Activated T-helper 1 cell treated with anti-CD3 and anti-CD28 coated beads, Interleukin-12 subunit alpha, Interleukin-12 subunit beta, Interleukin-2, Interleukin-4 antibody, amounts not matched to agents 30 ng/mL and 10 ng/mL and 1 ng/mL, durations not matched to agents 14 hours and 24 hours and 36 hours (primary cell): ENCODE measurements at regions of chr4 and their contacts with region 1.

Region 1: DNA sequence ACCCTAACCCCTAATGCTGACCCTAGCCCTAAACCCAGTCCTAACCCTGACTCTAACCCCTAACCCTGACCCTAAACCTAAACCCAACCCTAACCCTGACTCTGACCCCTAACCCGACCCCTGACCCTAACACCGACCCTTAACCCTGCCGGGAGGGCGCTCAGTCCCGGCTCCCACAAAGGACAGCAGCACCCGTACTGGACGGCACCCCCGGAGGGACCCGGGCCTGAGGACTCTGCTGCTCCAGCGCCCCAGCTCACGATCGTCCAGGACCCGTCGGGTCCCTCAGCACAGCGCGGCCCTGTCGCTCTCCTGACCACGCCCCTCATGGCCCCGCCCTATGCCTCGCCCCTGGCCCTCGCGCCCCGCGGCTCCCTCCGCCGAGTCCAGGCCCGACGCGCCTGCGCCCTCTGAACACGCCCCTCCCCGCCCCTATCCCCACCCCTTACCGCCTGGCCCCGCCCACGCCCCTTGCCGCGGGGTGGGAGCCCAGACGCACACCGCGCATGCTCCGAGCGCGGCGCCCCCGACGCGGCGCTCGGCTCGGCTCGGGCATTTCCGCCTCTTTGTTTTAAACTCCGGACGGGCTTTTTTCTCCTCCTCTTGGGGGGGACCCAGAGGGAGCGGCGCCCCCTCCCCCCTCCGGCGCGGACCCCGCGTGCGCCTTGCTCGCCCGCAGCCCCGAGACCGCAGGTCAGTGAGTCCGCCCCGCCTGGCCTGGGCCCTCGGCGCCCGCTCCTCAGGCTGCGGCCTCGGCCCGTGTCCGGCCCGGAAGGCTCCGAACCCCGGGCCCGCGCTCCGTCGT is at the start of gene PCGF3:
- DNase-seq: peak; percentile 95
- H3K4me3 Mint-ChIP-seq: peak within 1 kb of the TSS; percentile 83
- H3K27ac Mint-ChIP-seq: peak within 1 kb of the TSS; percentile 83
- H3K4me1 Mint-ChIP-seq: peaks cover 27% of the 10 kb centered on the region
- H3K27me3 Mint-ChIP-seq: peaks cover 2% of the 10 kb centered on the region
- total RNA-seq, gene PCGF3: 30.4 and 31.0 TPM in 2 replicates

Region 2: DNA sequence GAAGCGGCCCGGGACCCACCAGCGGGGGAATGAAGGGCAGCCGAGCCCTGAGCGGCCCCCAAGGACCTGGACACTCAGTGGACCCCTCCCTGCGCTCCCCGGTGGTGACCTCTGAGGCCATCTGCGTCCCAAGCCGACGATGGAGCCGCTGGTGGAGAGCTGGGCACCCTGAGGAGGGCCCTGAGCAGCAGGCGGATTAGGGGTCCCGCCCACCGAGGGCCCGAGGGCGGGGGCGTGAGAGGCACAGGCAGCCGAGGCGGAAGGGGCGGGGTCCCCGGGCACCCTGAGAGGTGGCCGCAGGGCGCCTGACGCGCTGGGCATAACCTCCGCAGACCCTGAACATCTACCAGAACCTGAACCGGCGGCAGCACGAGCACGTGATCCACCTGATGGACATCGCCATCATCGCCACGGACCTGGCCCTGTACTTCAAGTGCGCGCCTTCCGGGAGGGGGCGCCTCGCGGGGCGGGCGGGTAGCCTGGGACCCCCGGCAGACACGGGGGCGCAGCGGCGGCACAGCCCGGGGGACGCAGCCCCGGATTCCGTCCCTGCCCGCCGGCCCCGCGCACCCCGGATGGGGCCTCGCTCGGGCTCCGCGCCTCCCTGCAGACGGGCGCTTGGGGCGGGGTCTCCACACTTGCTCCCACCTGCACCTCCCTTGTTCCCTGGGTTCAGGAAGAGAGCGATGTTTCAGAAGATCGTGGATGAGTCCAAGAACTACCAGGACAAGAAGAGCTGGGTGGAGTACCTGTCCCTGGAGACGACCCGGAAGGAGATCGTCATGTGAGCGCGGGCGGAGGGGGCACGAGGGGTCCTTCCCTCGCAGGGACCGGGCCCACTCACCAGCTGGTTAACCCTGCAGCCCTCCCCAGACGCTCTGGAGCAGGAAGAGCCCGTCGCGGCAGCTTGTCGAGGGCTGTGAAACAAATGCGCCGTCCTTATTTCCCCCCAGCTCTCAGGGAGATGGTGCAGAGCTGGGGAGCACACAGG is 41.7 kb before region 1 on chr4:
- intact Hi-C with region 1: no loop called
- DNase-seq: peak; percentile 71
- H3K4me3 Mint-ChIP-seq: peak overlapping the region; percentile 86
- H3K27ac Mint-ChIP-seq: peak overlapping the region; percentile 68
- H3K4me1 Mint-ChIP-seq: peaks cover 8% of the 10 kb centered on the region
- H3K27me3 Mint-ChIP-seq: no peaks in the 10 kb centered on the region

Region 3: DNA sequence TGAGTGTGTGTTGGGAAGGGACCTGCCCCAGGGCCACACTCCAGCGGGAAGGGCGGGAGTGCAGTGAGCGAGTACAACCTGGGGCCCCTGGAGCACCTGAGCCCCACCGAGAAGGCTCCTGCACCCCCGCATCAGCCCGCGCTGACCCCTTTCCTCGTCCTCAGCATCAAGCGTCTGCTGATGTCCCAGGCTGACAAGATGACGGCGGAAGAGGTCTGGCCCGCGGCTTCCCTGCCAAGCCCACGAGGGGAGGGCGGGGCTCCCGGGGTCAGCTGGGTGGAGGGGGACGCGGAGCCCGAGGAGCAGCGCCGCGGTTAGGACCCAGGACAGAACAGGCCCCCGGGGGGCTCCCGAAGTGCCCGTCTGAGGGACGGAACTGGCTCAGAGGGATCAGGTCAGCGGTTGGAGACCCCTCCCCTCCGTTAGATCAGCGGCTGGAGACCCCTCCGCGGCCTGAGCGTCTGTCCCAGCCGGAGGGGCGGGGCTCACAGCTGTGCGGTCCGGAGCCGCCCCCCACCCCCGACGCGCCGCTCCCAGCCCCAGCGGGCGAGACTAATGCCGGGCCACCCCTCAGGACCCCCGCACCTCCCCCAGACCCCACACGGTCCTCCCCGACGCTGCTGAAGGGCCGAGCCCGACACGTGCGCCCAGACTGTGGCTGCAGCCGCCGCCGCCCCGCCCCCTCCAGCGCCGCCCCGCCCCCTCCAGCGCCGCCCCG is 24.4 kb before region 1 on chr4:
- intact Hi-C with region 1: loop called (anchors 1 kb)
- DNase-seq: peak; percentile 48
- H3K4me3 Mint-ChIP-seq: peak overlapping the region; percentile 68
- H3K27ac Mint-ChIP-seq: no peak overlapping the region
- H3K4me1 Mint-ChIP-seq: no peaks in the 10 kb centered on the region
- H3K27me3 Mint-ChIP-seq: no peaks in the 10 kb centered on the region

Region 4: DNA sequence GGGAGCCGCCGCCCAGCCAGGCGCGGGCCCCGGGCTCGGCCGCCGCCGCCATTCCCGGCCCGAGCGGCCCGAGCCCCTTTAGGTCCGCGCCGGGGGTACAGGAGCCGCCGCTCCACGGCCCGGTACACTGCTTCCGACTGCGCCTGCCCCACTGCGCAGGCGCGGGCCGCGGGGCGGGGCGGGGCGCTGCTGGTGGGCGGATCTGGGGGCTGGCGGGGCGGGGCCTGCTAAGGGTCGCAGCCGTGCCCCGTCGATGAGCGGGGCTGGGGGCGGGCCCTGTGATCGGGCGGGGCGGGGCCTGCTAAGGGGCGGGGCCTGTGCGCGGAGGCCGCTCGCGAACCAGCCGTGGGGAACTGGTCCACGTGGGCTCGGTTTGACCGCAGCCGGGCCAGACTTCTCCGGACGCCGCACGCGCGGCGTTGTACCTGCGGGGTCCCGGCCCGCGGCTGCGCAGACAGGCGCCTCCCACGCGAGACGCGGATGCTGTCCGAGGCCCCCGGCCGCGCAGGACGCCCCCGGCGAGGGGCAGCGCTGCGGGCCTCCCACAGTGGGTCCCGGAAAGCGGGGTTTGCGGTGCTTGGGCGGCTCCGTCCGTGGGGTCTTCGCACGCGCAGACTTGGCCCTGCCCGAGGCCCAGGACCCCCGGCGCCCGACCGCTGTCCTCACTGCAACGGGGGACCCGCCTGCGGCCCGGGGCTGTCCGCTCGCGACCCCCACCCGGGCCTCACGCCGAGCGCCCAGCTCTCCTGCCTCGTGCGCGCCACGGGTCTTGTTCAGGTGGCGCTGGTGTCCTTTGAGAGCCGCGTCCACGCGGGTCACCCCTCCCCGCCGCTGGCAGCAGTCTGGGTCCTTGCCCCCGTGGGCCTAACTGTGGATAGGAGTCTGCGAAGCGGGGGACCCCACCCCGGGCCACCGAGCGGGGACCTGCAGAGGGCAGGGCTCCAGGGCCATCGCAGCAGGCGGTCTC is 268.2 kb after region 1 on chr4 and contains the start of gene DGKQ:
- intact Hi-C with region 1: loop called (anchors 1 kb)
- DNase-seq: peak; percentile 80
- H3K4me3 Mint-ChIP-seq: peak within 1 kb of the TSS; percentile 51
- H3K27ac Mint-ChIP-seq: no peak within 1 kb of the TSS
- H3K4me1 Mint-ChIP-seq: no peaks in the 10 kb centered on the region
- H3K27me3 Mint-ChIP-seq: no peaks in the 10 kb centered on the region
- total RNA-seq, gene DGKQ: 17.8 and 18.0 TPM in 2 replicates

Region 5: DNA sequence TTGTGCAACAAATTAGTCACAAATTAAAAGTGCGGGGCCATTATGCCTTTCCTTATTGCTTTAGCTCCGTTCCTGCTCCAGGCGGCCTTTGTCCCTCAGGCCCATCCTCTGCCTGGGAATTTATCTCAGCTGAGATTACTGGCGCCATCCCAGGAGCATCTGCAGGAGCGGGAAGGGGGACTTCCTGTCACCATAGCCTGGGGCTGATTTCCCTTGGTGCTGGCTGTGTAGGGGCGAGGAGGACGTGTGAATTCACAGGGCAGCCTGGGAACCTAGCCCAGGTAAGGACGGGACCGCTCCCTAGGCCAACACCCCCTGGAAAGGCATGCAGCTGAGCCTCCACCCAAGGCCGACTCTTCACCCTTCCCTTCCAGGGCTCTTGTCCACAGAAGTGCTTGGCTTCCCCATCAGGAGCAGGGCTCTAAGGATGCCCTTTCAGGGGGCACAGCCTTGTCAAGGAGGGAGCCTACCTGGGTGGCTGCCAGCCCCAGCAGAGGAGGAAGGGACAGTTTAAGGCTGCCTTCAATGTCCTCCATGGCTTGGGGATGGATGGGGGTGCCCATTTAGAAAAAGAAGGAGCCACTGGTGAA is 773.4 kb after region 1 on chr4:
- intact Hi-C with region 1: no loop called
- DNase-seq: no peak
- H3K4me3 Mint-ChIP-seq: no peak overlapping the region
- H3K27ac Mint-ChIP-seq: no peak overlapping the region
- H3K4me1 Mint-ChIP-seq: no peaks in the 10 kb centered on the region
- H3K27me3 Mint-ChIP-seq: no peaks in the 10 kb centered on the region